Ascending aorta (tissue), 2 donors: ENCODE measurements at regions of chr6 and their contacts with region 1.

Region 1: DNA sequence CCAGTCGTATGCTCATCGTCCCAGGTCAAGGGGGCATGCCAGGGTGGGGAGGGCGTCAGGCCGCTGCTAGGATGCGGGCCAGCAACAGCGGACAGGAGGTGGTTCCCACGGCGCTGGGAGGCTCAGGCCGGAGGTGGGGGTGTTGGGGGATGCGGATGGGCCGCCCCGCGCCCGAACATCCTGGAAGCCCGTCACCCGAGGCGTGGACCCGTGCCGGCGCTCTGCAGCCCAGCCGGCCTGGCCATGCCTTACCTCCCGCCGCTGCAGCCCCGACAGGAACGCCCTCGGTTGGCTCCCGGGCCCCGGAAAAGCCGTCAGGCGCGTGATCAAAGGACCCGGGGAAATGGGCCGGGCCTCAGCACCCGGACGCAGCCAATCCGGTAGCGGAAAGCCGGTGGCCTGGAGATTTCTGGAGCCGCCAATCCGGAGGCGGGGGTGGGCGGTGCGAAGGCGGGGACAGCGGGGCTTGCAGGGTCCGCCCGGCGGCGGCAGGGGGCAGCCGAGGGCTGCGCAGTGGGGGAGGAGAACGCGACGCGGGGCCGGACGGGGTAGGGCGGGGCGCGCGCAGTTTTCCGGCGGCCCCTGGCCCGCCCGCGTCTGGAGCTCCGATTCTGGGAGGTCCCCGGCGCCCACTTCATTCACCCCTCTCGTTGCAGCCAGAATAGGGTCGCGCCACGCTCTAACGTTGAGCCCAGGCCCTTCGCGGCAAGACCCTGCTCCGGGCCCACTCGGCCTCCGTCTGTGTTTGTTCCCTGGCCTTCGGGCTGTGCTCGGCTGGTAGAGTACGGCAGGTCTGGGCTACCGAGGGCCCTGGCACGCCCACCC is at the start of gene SMIM29:
- DNase-seq: peak; percentile 85 to 98
- H3K4me3 ChIP-seq: peak within 1 kb of the TSS; percentile 73 to 89
- H3K27ac ChIP-seq: peak within 1 kb of the TSS; percentile 86 to 88
- H3K4me1 ChIP-seq: peaks cover 5 to 16% of the 10 kb centered on the region in 2 donors
- H3K27me3 ChIP-seq: no peaks in the 10 kb centered on the region
- CTCF ChIP-seq: peak; percentile 96 to 98 (median 97)
- total RNA-seq, gene SMIM29: 9.2 TPM

Region 2: GRCh38 chr6:34223956-34224940 is 24.7 kb before region 1 on chr6:
- intact Hi-C with region 1: loop called (anchors 1 kb)
- DNase-seq: peak; percentile 79 to 96
- H3K4me3 ChIP-seq: peak overlapping the region; percentile 73 to 77
- H3K27ac ChIP-seq: peak overlapping the region; percentile 91 to 92
- H3K4me1 ChIP-seq: peaks cover 0 to 10% of the 10 kb centered on the region in 2 donors
- H3K27me3 ChIP-seq: no peaks in the 10 kb centered on the region
- CTCF ChIP-seq: no peak

Region 3: DNA sequence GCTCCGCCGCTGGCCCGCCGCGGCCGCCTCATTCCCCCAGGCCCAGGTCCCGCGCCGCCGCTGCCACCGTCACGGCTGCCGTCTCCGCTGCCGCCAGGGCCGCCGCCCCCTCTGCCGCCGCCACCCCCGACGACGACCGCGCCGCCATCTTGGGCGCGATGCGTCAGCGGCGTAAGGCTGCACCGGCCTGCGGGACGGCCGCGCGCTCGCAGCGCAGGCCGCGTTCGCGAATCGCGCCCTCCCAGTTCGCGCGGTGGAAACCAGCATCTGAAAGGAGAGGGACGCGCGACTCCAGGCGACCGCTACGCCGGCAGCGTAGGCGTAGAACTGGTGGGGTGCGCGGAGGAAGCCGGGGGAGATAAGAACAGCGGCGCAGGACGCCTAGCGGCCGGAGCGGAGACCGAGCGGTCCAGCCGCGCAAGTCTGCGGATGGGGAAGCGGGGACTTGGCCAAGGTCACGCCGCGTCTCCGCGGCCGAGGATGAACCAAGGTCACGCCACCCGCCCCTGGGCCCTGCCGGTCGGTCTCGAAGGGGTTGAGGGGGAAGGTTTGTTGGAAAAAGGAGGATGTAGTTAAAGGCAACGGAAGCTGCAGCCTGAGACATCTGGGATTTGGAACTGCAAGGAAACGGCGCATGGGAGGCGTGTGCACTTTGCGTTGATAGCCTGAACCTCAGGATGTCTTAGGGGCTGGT is 143.7 kb after region 1 on chr6 and contains the start of gene NUDT3:
- intact Hi-C with region 1: loop called (anchors 1 kb)
- DNase-seq: peak; percentile 69 to 98
- H3K4me3 ChIP-seq: peak within 1 kb of the TSS; percentile 82 to 87
- H3K27ac ChIP-seq: peak within 1 kb of the TSS; percentile 90 to 93
- H3K4me1 ChIP-seq: peaks cover 0 to 13% of the 10 kb centered on the region in 2 donors
- H3K27me3 ChIP-seq: no peaks in the 10 kb centered on the region
- CTCF ChIP-seq: peak; percentile 74 to 87 (median 81)
- total RNA-seq, gene NUDT3: 18.8 TPM

Region 4: DNA sequence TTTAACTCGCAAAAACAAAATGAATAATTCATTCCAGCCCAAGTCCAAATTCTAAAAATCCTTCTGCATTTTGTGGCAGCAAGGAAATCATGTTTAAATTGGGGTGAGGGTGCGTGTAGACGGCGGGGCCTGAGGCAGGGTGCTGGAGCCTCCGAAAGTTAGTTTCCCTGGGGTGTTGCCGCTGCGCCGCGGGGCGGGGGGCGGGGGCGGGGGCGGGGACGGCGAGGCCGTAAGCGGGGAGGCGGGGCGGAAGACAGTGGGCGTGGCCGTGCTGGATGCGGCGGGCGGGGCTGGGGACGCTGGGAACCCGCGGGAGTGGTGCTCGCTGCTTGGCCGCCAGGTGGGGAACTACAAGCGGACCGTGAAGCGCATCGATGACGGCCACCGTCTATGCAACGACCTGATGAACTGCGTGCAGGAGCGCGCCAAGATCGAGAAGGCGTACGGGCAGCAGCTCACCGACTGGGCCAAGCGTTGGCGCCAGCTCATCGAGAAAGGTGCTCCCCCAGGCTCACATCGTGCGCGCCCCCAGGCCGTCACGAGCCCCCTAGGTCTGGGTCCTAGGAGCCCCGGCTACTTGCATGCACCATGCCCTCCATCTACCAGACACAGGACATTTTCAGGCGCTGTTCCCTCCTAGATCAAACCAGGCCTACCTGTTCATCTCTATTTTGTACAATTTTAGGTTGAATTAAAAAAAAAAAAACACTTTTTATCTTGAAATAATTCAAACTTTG is 278.2 kb after region 1 on chr6:
- intact Hi-C with region 1: loop called (anchors 2 kb)
- DNase-seq: peak; percentile 57 to 96
- H3K4me3 ChIP-seq: peak overlapping the region; percentile 37 to 40
- H3K27ac ChIP-seq: peak overlapping the region; percentile 41 to 52
- H3K4me1 ChIP-seq: peaks cover 0 to 8% of the 10 kb centered on the region in 2 donors
- H3K27me3 ChIP-seq: no peaks in the 10 kb centered on the region
- CTCF ChIP-seq: peak; percentile 66 to 85 (median 75)

Region 5: GRCh38 chr6:34757687-34758274 is 508.8 kb after region 1 on chr6:
- intact Hi-C with region 1: loop called (anchors 10 kb)
- DNase-seq: no peak
- H3K4me3 ChIP-seq: peak overlapping the region; percentile 84 to 87
- H3K27ac ChIP-seq: peak overlapping the region; percentile 88 to 92
- H3K4me1 ChIP-seq: peaks cover 3 to 7% of the 10 kb centered on the region in 2 donors
- H3K27me3 ChIP-seq: no peaks in the 10 kb centered on the region
- CTCF ChIP-seq: no peak